Mammary epithelial cell (primary cell): ENCODE measurements at regions of chr6 and their contacts with region 1.

Region 1: GRCh38 chr6:163443985-163444533 is 29.5 kb downstream of the QKI start:
- DNase-seq: no peak
- H3K4me3 ChIP-seq: no peak overlapping the region
- H3K27ac ChIP-seq: no peak overlapping the region
- H3K4me1 ChIP-seq: peaks cover 28% of the 10 kb centered on the region
- H3K27me3 ChIP-seq: no peaks in the 10 kb centered on the region
- CTCF ChIP-seq: no peak

Region 2: GRCh38 chr6:163048345-163048744 is 395.7 kb before region 1 on chr6:
- CTCF ChIA-PET with region 1: no interaction called
- dilution Hi-C with region 1: no loop called
- in situ Hi-C with region 1: no loop called
- intact Hi-C with region 1: no loop called
- DNase-seq: no peak
- H3K4me3 ChIP-seq: no peak overlapping the region
- H3K27ac ChIP-seq: no peak overlapping the region
- H3K4me1 ChIP-seq: no peaks in the 10 kb centered on the region
- H3K27me3 ChIP-seq: no peaks in the 10 kb centered on the region
- CTCF ChIP-seq: no peak

Region 3: GRCh38 chr6:163113358-163113962 is 330.6 kb before region 1 on chr6:
- CTCF ChIA-PET with region 1: no interaction called
- dilution Hi-C with region 1: no loop called
- in situ Hi-C with region 1: no loop called
- intact Hi-C with region 1: no loop called
- DNase-seq: no peak
- H3K4me3 ChIP-seq: no peak overlapping the region
- H3K27ac ChIP-seq: no peak overlapping the region
- H3K4me1 ChIP-seq: no peaks in the 10 kb centered on the region
- H3K27me3 ChIP-seq: no peaks in the 10 kb centered on the region
- CTCF ChIP-seq: no peak

Region 4: DNA sequence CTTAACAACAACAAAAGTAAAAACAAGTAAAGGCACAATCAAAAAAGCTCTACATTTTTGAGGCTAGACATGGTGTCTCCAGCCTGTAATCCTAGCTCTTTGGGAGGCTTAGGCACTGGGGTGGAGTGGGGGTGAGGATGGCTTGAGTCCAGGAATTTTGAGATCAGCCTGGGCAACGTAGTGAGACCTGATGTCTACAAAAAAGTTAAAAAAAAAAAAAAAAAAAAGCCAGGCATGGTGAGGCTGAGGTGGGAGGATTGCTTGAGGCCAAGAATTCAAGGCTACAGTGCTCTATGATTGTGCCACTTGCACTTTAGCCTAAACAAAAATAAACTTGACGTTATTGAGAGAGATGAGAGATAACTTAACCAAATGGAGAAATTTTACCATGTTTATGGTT is 30.5 kb after region 1 on chr6:
- CTCF ChIA-PET with region 1: no interaction called
- dilution Hi-C with region 1: loop called (anchors 5 kb)
- in situ Hi-C with region 1: no loop called
- intact Hi-C with region 1: no loop called
- DNase-seq: no peak
- H3K4me3 ChIP-seq: no peak overlapping the region
- H3K27ac ChIP-seq: no peak overlapping the region
- H3K4me1 ChIP-seq: no peaks in the 10 kb centered on the region
- H3K27me3 ChIP-seq: no peaks in the 10 kb centered on the region
- CTCF ChIP-seq: no peak